ENCODE measurements at regions of chr18 and their contacts with region 1.

Region 1: GRCh38 chr18:10851824-10852319 is 297.5 kb downstream of the PIEZO2 start:
- DNase-seq: peak in 4 of 5 donors; percentile 14 to 29 (median 22)
- H3K4me3 ChIP-seq: no peak overlapping the region
- H3K4me3 Mint-ChIP-seq: no peak overlapping the region
- H3K27ac ChIP-seq: no peak overlapping the region
- H3K27ac Mint-ChIP-seq: no peak overlapping the region
- H3K4me1 ChIP-seq: no peaks in the 10 kb centered on the region
- H3K4me1 Mint-ChIP-seq: no peaks in the 10 kb centered on the region
- H3K27me3 ChIP-seq: no peaks in the 10 kb centered on the region
- H3K27me3 Mint-ChIP-seq: peaks cover 10 to 11% of the 10 kb centered on the region in 2 donors

Region 2: DNA sequence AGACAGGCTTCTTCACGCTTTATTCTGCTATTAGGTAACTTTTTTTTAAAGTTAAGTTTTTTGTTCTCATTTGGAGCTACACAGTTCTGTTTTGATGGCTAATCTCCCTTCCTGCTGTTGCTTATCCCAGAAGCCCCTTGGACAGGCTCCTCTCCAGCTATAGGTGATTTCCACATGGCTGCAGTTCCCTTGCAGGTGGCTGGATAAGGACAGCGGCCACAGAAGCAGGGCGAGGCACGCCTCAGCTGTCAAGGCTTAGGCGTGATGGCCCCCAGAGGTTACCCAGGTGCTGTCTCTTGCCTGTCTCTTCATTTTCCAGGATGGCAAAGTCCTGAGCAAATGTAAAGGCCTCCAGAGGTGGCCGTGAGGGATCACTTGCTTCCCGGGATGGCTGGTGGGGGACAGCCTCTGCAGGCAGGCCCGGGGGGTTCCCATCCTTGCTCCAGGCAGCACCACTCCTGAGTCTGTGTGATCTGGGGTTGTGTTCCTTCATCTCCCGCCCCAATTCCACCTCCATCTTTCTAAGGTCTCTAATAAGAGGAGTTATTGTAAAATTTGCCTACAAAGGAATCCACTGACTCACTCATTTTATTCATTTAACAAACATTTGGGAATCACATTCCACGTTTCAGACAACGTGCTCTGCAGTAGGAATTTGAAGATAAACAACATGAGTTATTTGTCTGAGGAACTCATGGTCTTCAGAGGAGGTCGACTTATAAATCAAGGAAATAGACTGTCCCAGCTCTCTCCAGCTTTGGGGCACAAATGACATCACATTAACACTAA is 272.6 kb before region 1 on chr18:
- CTCF ChIA-PET with region 1: no interaction called
- POLR2A ChIA-PET with region 1: no interaction called
- intact Hi-C with region 1: no loop called
- DNase-seq: no peak
- H3K4me3 ChIP-seq: no peak overlapping the region
- H3K4me3 Mint-ChIP-seq: peak overlapping the region in 1 of 8 donors; percentile 5
- H3K27ac ChIP-seq: no peak overlapping the region
- H3K27ac Mint-ChIP-seq: peak overlapping the region in 1 of 7 donors; percentile 27
- H3K4me1 ChIP-seq: peaks cover 8% of the 10 kb centered on the region
- H3K4me1 Mint-ChIP-seq: peaks cover 0 to 30% (median 6%) of the 10 kb centered on the region in 4 donors
- H3K27me3 ChIP-seq: no peaks in the 10 kb centered on the region
- H3K27me3 Mint-ChIP-seq: no peaks in the 10 kb centered on the region

Region 3: GRCh38 chr18:11591957-11592356 is 740.1 kb after region 1 on chr18:
- CTCF ChIA-PET with region 1: no interaction called
- POLR2A ChIA-PET with region 1: no interaction called
- intact Hi-C with region 1: loop called (anchors 5 kb)
- DNase-seq: peak in 1 of 5 donors; percentile 2
- H3K4me3 ChIP-seq: no peak overlapping the region
- H3K4me3 Mint-ChIP-seq: no peak overlapping the region
- H3K27ac ChIP-seq: no peak overlapping the region
- H3K27ac Mint-ChIP-seq: no peak overlapping the region
- H3K4me1 ChIP-seq: peaks cover 18% of the 10 kb centered on the region
- H3K4me1 Mint-ChIP-seq: peaks cover 9 to 17% (median 13%) of the 10 kb centered on the region in 4 donors
- H3K27me3 ChIP-seq: no peaks in the 10 kb centered on the region
- H3K27me3 Mint-ChIP-seq: peaks cover 8 to 9% of the 10 kb centered on the region in 2 donors

Region 4: DNA sequence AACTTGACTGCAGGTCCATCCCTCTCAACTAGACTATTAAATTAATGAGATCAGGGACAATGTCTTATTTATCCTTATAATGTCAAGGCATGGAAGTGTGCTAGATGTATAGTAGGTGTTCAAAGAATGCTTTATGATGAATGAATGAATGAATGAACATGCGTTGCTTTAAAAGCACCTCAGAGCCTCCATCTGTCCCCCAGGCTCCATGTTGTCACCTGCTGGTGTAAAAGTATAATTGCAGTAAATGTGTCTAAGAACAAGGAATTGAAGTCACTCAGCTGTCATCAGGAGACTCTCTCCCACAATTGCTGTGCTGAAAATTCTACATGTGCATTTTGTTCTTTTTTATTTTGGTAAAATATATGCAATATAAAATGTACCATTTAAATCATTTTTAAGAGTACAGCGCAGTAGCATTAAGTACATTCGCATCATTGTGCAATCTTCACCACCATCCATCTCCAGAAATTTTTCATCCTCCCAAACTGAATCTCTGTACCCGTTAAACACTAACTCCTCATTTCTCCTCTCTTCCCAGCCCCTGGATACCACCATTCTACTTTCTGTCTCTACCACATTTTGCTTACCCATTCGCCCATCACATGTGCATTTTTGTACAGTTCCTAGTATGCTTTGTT is 889.8 kb after region 1 on chr18:
- CTCF ChIA-PET with region 1: no interaction called
- POLR2A ChIA-PET with region 1: no interaction called
- intact Hi-C with region 1: loop called (anchors 10 kb)
- DNase-seq: peak in 1 of 5 donors; percentile 16
- H3K4me3 ChIP-seq: no peak overlapping the region
- H3K4me3 Mint-ChIP-seq: no peak overlapping the region
- H3K27ac ChIP-seq: no peak overlapping the region
- H3K27ac Mint-ChIP-seq: peak overlapping the region in 1 of 7 donors; percentile 5
- H3K4me1 ChIP-seq: no peaks in the 10 kb centered on the region
- H3K4me1 Mint-ChIP-seq: no peaks in the 10 kb centered on the region
- H3K27me3 ChIP-seq: peaks cover 5% of the 10 kb centered on the region
- H3K27me3 Mint-ChIP-seq: peaks cover 24 to 31% of the 10 kb centered on the region in 2 donors